ENCODE measurements at regions of chr9 and their contacts with region 1.

Region 1: DNA sequence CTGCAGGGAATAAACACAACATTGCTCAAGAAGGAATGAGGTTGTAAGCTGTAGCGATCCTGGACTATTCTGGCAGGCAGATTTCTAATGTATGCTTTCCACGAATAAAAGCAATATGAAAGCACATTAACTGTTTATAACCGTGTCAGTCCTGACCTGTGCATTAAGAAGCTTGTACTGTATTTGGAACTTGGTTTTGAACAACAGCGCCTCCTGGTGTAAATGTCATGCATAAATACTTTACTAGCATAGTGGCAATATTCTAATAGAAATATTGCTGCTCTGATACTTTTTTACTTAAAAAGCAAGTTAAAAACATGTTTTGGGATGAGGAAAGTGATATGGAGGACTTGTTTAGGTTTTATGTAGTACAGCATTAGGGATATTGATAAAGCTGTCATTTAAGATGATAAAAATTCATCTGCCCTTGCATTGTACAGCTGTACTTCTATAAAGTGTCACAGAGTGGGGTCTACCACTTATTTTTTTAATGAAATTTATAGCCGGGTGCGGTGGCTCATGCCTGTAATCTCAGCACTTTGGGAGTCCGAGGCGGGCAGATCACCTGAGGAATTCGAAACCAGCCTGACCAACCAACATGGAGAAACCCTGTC is 70.7 kb upstream of the GNE start:
- DNase-seq: peak; percentile 78
- H3K4me3 ChIP-seq: no peak overlapping the region
- H3K27ac ChIP-seq: no peak overlapping the region
- H3K4me1 ChIP-seq: no peaks in the 10 kb centered on the region
- H3K27me3 ChIP-seq: no peaks in the 10 kb centered on the region
- CTCF ChIP-seq: peak; percentile 46 to 55
- POLR2A ChIP-seq: no peak

Region 2: GRCh38 chr9:36190388-36191287 is 138.3 kb before region 1 on chr9 and contains the start of gene CLTA:
- CTCF ChIA-PET with region 1: interaction called, 24 read pairs
- POLR2A ChIA-PET with region 1: interaction called, 4 read pairs
- dilution Hi-C with region 1: no loop called
- intact Hi-C with region 1: loop called (anchors 5 kb)
- DNase-seq: peak; percentile 98
- H3K4me3 ChIP-seq: peak within 1 kb of the TSS; percentile 80 to 93 (median 90)
- H3K27ac ChIP-seq: peak within 1 kb of the TSS; percentile 78
- H3K4me1 ChIP-seq: peaks cover 31% of the 10 kb centered on the region
- H3K27me3 ChIP-seq: no peaks in the 10 kb centered on the region
- CTCF ChIP-seq: peak; percentile 40 to 50
- POLR2A ChIP-seq: peak; percentile 98
- total RNA-seq, gene CLTA: 281 and 317 TPM in 2 replicates

Region 3: GRCh38 chr9:36250079-36250478 is 78.8 kb before region 1 on chr9:
- CTCF ChIA-PET with region 1: interaction called, 184 read pairs
- POLR2A ChIA-PET with region 1: no interaction called
- dilution Hi-C with region 1: no loop called
- intact Hi-C with region 1: loop called (anchors 1 kb)
- DNase-seq: no peak
- H3K4me3 ChIP-seq: no peak overlapping the region
- H3K27ac ChIP-seq: no peak overlapping the region
- H3K4me1 ChIP-seq: no peaks in the 10 kb centered on the region
- H3K27me3 ChIP-seq: no peaks in the 10 kb centered on the region
- CTCF ChIP-seq: no peak
- POLR2A ChIP-seq: no peak

Region 4: DNA sequence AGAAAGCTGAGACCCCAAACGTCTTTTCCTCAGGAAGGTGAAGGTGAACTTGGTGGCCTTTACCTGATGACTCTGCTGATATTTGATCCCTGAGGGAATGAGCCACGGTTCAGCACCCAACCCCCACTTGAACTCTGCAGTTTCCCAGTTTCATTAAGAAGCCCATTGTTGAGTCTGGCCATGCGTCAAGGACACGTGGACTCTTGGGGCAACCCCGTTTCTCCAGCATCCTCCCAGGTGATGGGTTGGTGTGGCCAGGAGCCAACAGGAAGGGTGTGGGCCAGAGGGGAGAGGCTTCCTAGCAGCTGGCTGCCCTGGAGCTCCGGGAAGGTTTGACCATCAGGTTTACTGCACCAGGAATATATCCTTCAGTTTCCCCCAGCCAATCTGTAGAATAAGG is 11.1 kb before region 1 on chr9:
- CTCF ChIA-PET with region 1: interaction called, 46 read pairs
- POLR2A ChIA-PET with region 1: no interaction called
- dilution Hi-C with region 1: no loop called
- intact Hi-C with region 1: no loop called
- DNase-seq: no peak
- H3K4me3 ChIP-seq: no peak overlapping the region
- H3K27ac ChIP-seq: no peak overlapping the region
- H3K4me1 ChIP-seq: peaks cover 7% of the 10 kb centered on the region
- H3K27me3 ChIP-seq: no peaks in the 10 kb centered on the region
- CTCF ChIP-seq: no peak
- POLR2A ChIP-seq: no peak